ENCODE measurements at regions of chr6 and their contacts with region 1.

Region 1: GRCh38 chr6:122033539-122034181 is 365.8 kb upstream of the HSF2 start:
- DNase-seq: no peak
- H3K4me3 ChIP-seq: no peak overlapping the region
- H3K27ac ChIP-seq: peak overlapping the region; percentile 47
- H3K4me1 ChIP-seq: no peaks in the 10 kb centered on the region
- H3K27me3 ChIP-seq: no peaks in the 10 kb centered on the region
- CTCF ChIP-seq: peak in 2 of 3 experiments; percentile 56 to 71
- POLR2A ChIP-seq: no peak

Region 2: GRCh38 chr6:121897337-121897760 is 136.3 kb before region 1 on chr6:
- intact Hi-C with region 1: no loop called
- DNase-seq: no peak
- H3K4me3 ChIP-seq: no peak overlapping the region
- H3K27ac ChIP-seq: no peak overlapping the region
- H3K4me1 ChIP-seq: no peaks in the 10 kb centered on the region
- H3K27me3 ChIP-seq: no peaks in the 10 kb centered on the region
- CTCF ChIP-seq: no peak
- POLR2A ChIP-seq: no peak

Region 3: DNA sequence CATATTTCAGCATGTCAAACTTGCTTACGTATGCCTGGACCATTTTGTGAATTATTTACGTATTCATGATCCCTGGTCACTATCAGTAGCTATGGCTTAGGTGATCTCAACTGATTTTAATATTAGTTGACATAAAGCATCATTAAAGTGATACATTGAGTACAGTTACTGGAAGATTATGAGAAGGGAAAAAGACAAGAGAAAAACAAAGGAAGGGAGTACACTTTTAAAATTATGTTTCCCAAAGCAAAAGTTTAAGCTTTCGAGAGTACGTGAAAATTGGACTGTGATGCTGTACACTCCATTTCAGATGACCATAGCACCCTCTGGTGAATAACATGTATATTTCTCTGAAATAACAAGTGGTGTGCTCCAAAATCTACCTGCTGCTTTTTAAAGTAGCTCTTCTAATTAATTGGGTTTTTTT is 150.8 kb after region 1 on chr6:
- intact Hi-C with region 1: loop called (anchors 10 kb)
- DNase-seq: no peak
- H3K4me3 ChIP-seq: no peak overlapping the region
- H3K27ac ChIP-seq: no peak overlapping the region
- H3K4me1 ChIP-seq: peaks cover 8% of the 10 kb centered on the region
- H3K27me3 ChIP-seq: no peaks in the 10 kb centered on the region
- CTCF ChIP-seq: peak in 2 of 3 experiments; percentile 38 to 40
- POLR2A ChIP-seq: no peak